Head of caudate nucleus (tissue), 42 donors: ENCODE measurements at regions of chr15 and their contacts with region 1.

Region 1: GRCh38 chr15:82046666-82047452 is 1.0 kb upstream of the MEX3B start:
- DNase-seq: peak; percentile 68 to 95 (median 89)

Region 2: DNA sequence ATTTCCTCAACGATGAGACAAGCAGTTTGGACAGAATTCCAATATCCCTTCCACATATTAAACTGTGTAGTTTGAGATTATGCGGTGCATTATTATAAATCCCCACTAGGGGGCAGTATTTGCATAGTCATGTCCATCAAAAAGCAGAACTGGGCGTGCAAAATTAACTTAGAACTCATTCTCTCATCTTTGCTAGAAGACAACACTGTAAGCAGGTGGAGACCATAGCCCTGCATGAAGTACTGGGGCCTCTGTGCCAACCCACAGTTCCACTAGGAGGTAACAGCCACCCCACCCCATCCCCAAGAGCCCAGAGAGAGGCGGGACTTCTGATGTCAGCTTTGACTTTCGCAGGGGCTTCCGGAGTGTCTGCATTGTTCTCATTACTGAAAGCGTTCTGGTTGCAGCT is 566.2 kb before region 1 on chr15:
- intact Hi-C with region 1: loop called (anchors 5 kb)
- DNase-seq: peak in 26 of 42 donors; percentile 7 to 86 (median 39)

Region 3: DNA sequence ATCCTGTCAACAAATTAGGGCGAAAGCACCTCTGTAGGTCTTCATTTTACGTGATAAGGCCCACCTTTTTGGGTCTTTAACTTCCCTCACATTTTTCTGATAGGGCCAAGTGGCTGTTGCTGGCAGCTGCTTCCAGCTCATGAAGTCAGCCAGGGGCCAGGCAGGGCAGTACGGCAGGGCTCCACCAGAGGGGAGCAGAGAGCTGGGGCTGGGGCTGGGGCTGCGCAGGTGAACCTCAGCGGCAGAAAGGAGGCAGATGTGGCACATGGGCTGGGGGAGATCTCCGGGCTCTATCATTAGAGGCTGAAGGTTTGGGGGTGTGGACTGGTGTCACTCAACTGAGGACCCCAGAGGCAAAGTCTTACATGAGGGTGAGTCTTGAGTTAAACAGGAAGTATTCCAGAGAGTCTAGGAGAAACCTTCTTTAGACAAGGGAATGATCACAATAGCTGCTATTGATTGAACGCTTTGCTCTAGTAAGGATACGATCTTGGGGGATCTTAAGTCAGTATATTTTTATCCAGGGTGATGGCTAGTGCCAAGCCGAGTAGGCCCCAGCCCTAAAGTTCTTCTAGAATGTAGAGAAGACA is 61.7 kb after region 1 on chr15:
- intact Hi-C with region 1: no loop called
- DNase-seq: peak in 33 of 42 donors; percentile 10 to 64 (median 33)

Region 4: DNA sequence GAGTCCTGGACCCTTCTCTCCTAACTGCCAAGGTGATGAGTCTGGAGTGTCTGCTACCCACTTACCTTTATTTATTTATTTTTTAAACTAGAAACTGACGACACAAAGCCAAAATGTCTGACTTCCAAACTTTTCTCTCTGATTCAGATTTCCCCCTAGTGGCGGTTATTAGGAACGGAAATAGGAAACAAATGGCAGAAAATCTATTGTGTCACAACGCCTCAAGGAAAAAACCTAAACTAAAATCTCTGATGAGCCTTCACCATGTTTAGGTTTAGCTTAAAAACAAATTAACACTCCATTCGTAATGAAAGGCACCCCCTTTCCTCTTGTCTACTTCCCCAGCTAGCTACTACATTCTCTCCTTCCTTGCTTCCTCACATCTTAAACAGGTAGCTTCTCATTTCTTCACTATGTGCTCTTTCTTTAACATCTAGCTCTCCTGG is 93.0 kb after region 1 on chr15:
- intact Hi-C with region 1: loop called (anchors 10 kb)
- DNase-seq: peak in 3 of 42 donors; percentile 10 to 49 (median 10)

Region 5: GRCh38 chr15:82183121-82184033 is 136.5 kb after region 1 on chr15:
- intact Hi-C with region 1: loop called (anchors 5 kb)
- DNase-seq: peak in 2 of 42 donors; percentile 19 to 23